ENCODE measurements at regions of chr17 and their contacts with region 1.

Region 1: DNA sequence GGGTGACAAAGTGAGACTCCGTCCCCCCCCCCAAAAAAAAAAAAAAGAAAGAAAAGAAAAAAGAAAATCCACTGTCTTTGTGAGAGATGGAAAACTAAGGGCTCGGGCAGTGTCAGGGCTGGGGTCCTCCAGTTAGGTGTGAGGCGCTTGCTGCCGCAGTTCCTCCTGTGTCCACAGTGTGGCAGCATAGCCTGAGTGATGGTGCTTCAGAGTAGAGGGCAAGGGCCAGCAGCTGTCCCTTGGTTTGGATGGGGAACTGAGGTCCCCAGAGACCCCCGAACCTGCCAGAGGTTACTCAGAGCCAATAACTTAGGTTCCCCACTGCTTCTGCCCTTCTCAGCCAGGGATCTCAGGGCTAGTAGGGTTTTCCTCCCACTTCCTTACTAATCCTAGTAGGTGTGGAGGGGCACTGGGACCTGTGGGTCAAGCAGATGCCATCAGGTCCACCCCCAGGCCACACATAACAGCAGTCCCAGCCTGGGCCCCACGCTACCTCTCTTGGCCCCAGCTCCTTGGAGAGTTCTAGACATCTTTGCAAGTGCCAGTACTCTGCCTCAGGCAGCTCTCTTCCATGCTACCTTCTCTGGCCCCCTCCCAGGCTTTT is 7.9 kb upstream of the LLGL1 start:
- DNase-seq: peak; percentile 86
- H3K4me3 ChIP-seq: no peak overlapping the region; a peak in 1 of 4 replicates
- H3K27ac ChIP-seq: no peak overlapping the region
- H3K4me1 ChIP-seq: peaks cover 5 to 12% of the 10 kb centered on the region in 2 experiments; a peak in 3 of 4 replicates
- H3K27me3 ChIP-seq: no peaks in the 10 kb centered on the region
- CTCF ChIP-seq: peak; percentile 91
- EP300 ChIP-seq: no peak
- RAD21 ChIP-seq: peak; percentile 82

Region 2: GRCh38 chr17:18141210-18141803 is 76.2 kb before region 1 on chr17:
- CTCF ChIA-PET with region 1: interaction called, 25 read pairs
- POLR2A ChIA-PET with region 1: no interaction called
- DNase-seq: peak; percentile 72
- H3K4me3 ChIP-seq: no peak overlapping the region
- H3K27ac ChIP-seq: no peak overlapping the region
- H3K4me1 ChIP-seq: peaks cover 0 to 10% of the 10 kb centered on the region in 2 experiments; a peak in 1 of 4 replicates
- H3K27me3 ChIP-seq: no peaks in the 10 kb centered on the region
- CTCF ChIP-seq: peak; percentile 73
- EP300 ChIP-seq: no peak
- RAD21 ChIP-seq: peak; percentile 69

Region 3: GRCh38 chr17:18184143-18185031 is 33.1 kb before region 1 on chr17:
- CTCF ChIA-PET with region 1: interaction called, 14 read pairs
- POLR2A ChIA-PET with region 1: no interaction called
- DNase-seq: no peak
- H3K4me3 ChIP-seq: peak overlapping the region; percentile 65 to 84
- H3K27ac ChIP-seq: peak overlapping the region; percentile 96 to 98
- H3K4me1 ChIP-seq: peaks cover 17 to 50% of the 10 kb centered on the region in 2 experiments
- H3K27me3 ChIP-seq: no peaks in the 10 kb centered on the region
- CTCF ChIP-seq: 0 out of 2 replicates have a peak, but pooled peaks have one; percentile 7
- EP300 ChIP-seq: no peak
- RAD21 ChIP-seq: no peak

Region 4: GRCh38 chr17:18191967-18192366 is 25.5 kb before region 1 on chr17:
- CTCF ChIA-PET with region 1: interaction called, 14 read pairs
- POLR2A ChIA-PET with region 1: no interaction called
- DNase-seq: peak; percentile 59
- H3K4me3 ChIP-seq: no peak overlapping the region
- H3K27ac ChIP-seq: no peak overlapping the region; a peak in 1 of 4 replicates
- H3K4me1 ChIP-seq: peaks cover 11 to 44% of the 10 kb centered on the region in 2 experiments
- H3K27me3 ChIP-seq: no peaks in the 10 kb centered on the region
- CTCF ChIP-seq: peak; percentile 42
- EP300 ChIP-seq: no peak
- RAD21 ChIP-seq: peak; percentile 54

Region 5: GRCh38 chr17:18205861-18206260 is 11.7 kb before region 1 on chr17:
- CTCF ChIA-PET with region 1: interaction called, 41 read pairs
- POLR2A ChIA-PET with region 1: interaction called, 3 read pairs
- DNase-seq: no peak
- H3K4me3 ChIP-seq: no peak overlapping the region
- H3K27ac ChIP-seq: no peak overlapping the region; a peak in 1 of 4 replicates
- H3K4me1 ChIP-seq: peaks cover 0 to 9% of the 10 kb centered on the region in 2 experiments; a peak in 1 of 4 replicates
- H3K27me3 ChIP-seq: no peaks in the 10 kb centered on the region
- CTCF ChIP-seq: no peak
- EP300 ChIP-seq: no peak
- RAD21 ChIP-seq: no peak

Region 6: GRCh38 chr17:18248300-18248731 is 30.8 kb after region 1 on chr17:
- CTCF ChIA-PET with region 1: interaction called, 14 read pairs
- POLR2A ChIA-PET with region 1: no interaction called
- DNase-seq: peak; percentile 90
- H3K4me3 ChIP-seq: no peak overlapping the region; a peak in 1 of 4 replicates
- H3K27ac ChIP-seq: no peak overlapping the region
- H3K4me1 ChIP-seq: no peaks in the 10 kb centered on the region
- H3K27me3 ChIP-seq: no peaks in the 10 kb centered on the region
- CTCF ChIP-seq: peak; percentile 72
- EP300 ChIP-seq: no peak
- RAD21 ChIP-seq: peak; percentile 81

Measured in SK-N-SH (cell line).